Naive thymus-derived CD4-positive, alpha-beta T cell (primary cell): ENCODE measurements at regions of chr19 and their contacts with region 1.

Region 1: GRCh38 chr19:11798391-11799330 is at the start of gene ZNF491:
- DNase-seq: peak; percentile 66 to 84 (median 79)
- ATAC-seq: peak; percentile 98
- H3K4me3 ChIP-seq: peak within 1 kb of the TSS; percentile 71
- H3K4me3 Mint-ChIP-seq: peak within 1 kb of the TSS; percentile 82 to 95 (median 92)
- H3K27ac ChIP-seq: peak within 1 kb of the TSS; percentile 82
- H3K27ac Mint-ChIP-seq: peak within 1 kb of the TSS; percentile 45 to 94 (median 91)
- H3K4me1 ChIP-seq: peaks cover 8 to 12% of the 10 kb centered on the region in 2 donors
- H3K4me1 Mint-ChIP-seq: peaks cover 12 to 29% (median 20%) of the 10 kb centered on the region in 7 donors
- H3K27me3 ChIP-seq: no peaks in the 10 kb centered on the region
- H3K27me3 Mint-ChIP-seq: no peaks in the 10 kb centered on the region
- total RNA-seq, gene ZNF491: 0.92 to 6.1 (median 1.9) TPM

Region 2: DNA sequence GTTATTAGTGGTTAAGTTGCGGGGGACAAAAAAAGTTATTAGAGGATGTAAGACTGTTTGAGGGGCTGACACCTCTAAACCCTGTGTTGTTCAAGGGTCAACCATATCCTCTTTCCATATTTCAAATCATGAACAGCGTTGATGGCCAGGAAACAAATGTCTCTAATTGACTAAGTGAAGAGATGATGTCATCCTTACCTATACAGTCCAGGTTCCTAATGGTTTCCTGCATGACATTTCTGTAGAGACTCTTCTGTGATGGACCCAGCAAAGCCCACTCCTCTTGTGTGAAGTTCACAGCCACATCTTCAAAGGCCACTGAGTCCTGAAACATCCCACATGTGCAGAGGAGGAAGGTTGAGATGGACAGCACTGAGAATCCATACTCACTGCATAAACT is 73.7 kb before region 1 on chr19:
- CTCF ChIA-PET with region 1: no interaction called
- POLR2A ChIA-PET with region 1: no interaction called
- intact Hi-C with region 1: no loop called
- DNase-seq: no peak
- ATAC-seq: no peak
- H3K4me3 ChIP-seq: no peak overlapping the region
- H3K4me3 Mint-ChIP-seq: no peak overlapping the region
- H3K27ac ChIP-seq: no peak overlapping the region
- H3K27ac Mint-ChIP-seq: no peak overlapping the region
- H3K4me1 ChIP-seq: no peaks in the 10 kb centered on the region
- H3K4me1 Mint-ChIP-seq: no peaks in the 10 kb centered on the region
- H3K27me3 ChIP-seq: no peaks in the 10 kb centered on the region
- H3K27me3 Mint-ChIP-seq: no peaks in the 10 kb centered on the region

Region 3: DNA sequence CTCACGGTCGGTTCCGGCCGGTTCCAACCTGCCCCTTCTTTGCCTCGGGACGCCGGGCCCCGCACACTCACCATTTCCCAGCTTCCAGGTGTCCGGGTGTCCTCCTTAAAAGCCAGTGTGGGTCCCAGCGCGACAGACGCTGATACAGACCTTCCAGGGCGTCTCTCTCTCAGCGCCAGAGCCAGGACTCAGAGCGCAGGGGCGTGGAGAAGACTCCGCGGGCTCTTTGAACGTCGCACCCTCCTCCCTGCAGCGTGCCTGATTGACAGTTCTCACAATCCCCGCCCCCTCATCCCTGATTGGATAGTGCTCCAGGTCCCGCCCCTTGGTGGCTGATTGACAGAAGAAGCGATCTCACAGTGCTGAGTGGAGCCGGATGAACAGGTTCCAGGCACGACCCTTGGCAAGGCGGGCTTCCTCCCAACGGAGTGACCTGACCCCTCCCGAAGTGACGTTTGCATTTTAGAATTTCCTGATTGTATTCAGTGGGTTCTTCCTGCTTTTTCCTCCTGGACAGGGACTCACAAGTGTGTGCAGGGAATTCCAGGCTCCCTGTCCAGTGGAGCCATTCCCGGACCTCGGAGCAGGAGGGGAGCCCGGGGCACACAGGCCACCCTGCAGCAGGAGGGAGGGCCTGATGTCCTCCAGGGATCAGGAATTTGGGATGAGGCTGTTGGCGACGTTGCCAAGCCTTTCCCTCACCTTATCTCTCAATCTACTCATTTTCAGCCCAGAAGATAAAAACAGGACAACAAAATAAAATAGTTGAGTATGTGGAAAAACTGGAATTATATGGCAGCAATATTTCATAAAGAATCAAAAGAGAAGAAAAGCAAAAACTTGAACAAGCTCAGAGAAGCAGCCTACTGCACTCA is 59.7 kb before region 1 on chr19 and contains the start of gene ZNF823:
- CTCF ChIA-PET with region 1: no interaction called
- POLR2A ChIA-PET with region 1: interaction called, 4 read pairs
- intact Hi-C with region 1: loop called (anchors 1 to 5 kb)
- DNase-seq: peak; percentile 85 to 98 (median 96)
- ATAC-seq: peak; percentile 100
- H3K4me3 ChIP-seq: peak within 1 kb of the TSS; percentile 75
- H3K4me3 Mint-ChIP-seq: peak within 1 kb of the TSS; percentile 94 to 100 (median 98)
- H3K27ac ChIP-seq: peak within 1 kb of the TSS; percentile 73
- H3K27ac Mint-ChIP-seq: peak within 1 kb of the TSS; percentile 82 to 98 (median 92)
- H3K4me1 ChIP-seq: peaks cover 0 to 11% of the 10 kb centered on the region in 2 donors
- H3K4me1 Mint-ChIP-seq: peaks cover 13 to 36% (median 25%) of the 10 kb centered on the region in 7 donors
- H3K27me3 ChIP-seq: no peaks in the 10 kb centered on the region
- H3K27me3 Mint-ChIP-seq: peaks cover 0 to 6% (median 4%) of the 10 kb centered on the region in 5 donors
- total RNA-seq, gene ZNF823: 1.8 to 6.8 (median 2.8) TPM

Region 4: DNA sequence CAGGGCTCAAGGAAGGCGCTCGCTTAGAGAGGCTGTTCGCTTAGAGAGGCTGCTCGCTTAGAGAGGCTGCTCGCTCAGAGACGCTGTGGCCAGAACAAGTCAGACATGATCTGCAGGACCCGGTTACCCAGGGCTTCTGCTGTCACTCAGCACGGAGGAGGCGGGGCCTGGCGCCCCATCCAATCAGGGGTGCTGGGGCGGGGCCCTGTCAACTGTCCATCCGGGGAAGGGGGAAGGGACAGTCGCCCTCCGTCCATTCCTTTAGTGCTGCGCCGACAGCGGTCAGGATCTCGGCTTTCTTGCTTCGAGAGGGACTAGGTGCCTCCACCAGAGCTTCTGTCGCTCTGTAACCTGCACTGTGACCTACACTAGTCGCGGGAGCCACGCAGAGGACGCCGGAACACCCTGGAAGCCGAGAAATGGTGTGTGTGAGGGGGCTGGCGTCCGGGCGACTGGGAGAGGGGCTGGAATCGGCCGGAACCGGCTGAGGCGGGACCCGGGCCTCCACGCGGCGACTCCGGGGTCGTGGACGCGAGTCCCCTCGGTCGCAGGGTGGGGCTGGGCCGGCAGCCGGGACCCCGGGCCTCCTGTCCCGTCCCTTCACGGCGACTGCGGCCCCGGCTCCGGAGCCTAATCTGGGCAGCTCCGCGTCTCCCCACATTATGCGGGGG is 15.5 kb after region 1 on chr19 and contains the start of gene ZNF440:
- CTCF ChIA-PET with region 1: interaction called, 54 read pairs
- POLR2A ChIA-PET with region 1: interaction called, 12 read pairs
- intact Hi-C with region 1: loop called (anchors 1 to 2 kb)
- DNase-seq: peak; percentile 65 to 88 (median 73)
- ATAC-seq: peak; percentile 99
- H3K4me3 ChIP-seq: peak within 1 kb of the TSS; percentile 94
- H3K4me3 Mint-ChIP-seq: peak within 1 kb of the TSS; percentile 85 to 96 (median 92)
- H3K27ac ChIP-seq: peak within 1 kb of the TSS; percentile 66
- H3K27ac Mint-ChIP-seq: peak within 1 kb of the TSS; percentile 72 to 90 (median 81)
- H3K4me1 ChIP-seq: peaks cover 0 to 4% of the 10 kb centered on the region in 2 donors
- H3K4me1 Mint-ChIP-seq: peaks cover 10 to 39% (median 19%) of the 10 kb centered on the region in 7 donors
- H3K27me3 ChIP-seq: no peaks in the 10 kb centered on the region
- H3K27me3 Mint-ChIP-seq: no peaks in the 10 kb centered on the region
- total RNA-seq, gene ZNF440: 10.4 to 19.5 (median 16.0) TPM

Region 5: DNA sequence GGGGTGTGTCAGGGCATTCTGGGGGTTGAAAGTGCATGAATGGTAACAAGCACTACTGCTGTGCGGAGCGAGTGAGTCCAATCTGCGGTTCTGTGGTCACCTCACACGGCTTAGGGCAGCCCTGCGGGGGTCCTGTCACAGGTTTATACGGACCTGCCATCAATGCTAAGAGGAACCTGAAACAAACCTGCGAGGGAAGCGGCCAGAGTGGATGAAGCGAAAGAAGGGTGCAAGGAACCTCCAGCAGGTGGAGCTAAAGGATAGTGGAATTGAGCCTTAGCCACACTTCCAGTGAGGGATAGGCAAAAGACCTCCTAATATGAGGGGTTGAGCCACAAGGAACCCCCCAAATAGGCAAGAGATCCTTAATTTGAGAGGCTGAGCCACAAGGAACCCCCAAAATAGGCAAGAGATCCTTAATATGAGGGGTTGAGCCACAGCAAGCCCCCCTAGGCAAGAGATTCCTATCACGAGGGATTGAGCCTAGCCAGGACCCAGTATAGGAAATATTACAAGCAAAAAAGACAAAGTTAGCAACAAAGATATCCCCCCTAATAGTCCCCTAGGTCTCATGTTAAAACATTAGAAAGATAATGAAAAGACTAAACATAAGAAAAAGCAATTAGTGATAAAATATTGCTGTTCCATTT is 82.6 kb after region 1 on chr19:
- CTCF ChIA-PET with region 1: interaction called, 9 read pairs
- POLR2A ChIA-PET with region 1: interaction called, 3 read pairs
- intact Hi-C with region 1: loop called (anchors 1 kb)
- DNase-seq: peak; percentile 20 to 72 (median 59)
- ATAC-seq: peak; percentile 74
- H3K4me3 ChIP-seq: no peak overlapping the region
- H3K4me3 Mint-ChIP-seq: peak overlapping the region in 1 of 10 donors; percentile 31
- H3K27ac ChIP-seq: no peak overlapping the region
- H3K27ac Mint-ChIP-seq: peak overlapping the region in 3 of 9 donors; percentile 3 to 15 (median 12)
- H3K4me1 ChIP-seq: no peaks in the 10 kb centered on the region
- H3K4me1 Mint-ChIP-seq: peaks cover 0 to 7% (median 0%) of the 10 kb centered on the region in 7 donors
- H3K27me3 ChIP-seq: no peaks in the 10 kb centered on the region
- H3K27me3 Mint-ChIP-seq: peaks cover 0 to 3% (median 0%) of the 10 kb centered on the region in 5 donors

Region 6: GRCh38 chr19:11987405-11988281 is 189.0 kb after region 1 on chr19:
- CTCF ChIA-PET with region 1: interaction called, 23 read pairs
- POLR2A ChIA-PET with region 1: interaction called, 6 read pairs
- intact Hi-C with region 1: loop called (anchors 1 kb)
- DNase-seq: peak; percentile 73 to 90 (median 87)
- ATAC-seq: peak; percentile 95
- H3K4me3 ChIP-seq: peak overlapping the region; percentile 98
- H3K4me3 Mint-ChIP-seq: peak overlapping the region; percentile 84 to 99 (median 96)
- H3K27ac ChIP-seq: peak overlapping the region; percentile 88
- H3K27ac Mint-ChIP-seq: peak overlapping the region; percentile 70 to 97 (median 96)
- H3K4me1 ChIP-seq: peaks cover 0 to 8% of the 10 kb centered on the region in 2 donors
- H3K4me1 Mint-ChIP-seq: peaks cover 15 to 39% (median 28%) of the 10 kb centered on the region in 7 donors
- H3K27me3 ChIP-seq: no peaks in the 10 kb centered on the region
- H3K27me3 Mint-ChIP-seq: peaks cover 0 to 2% (median 0%) of the 10 kb centered on the region in 5 donors